Left lung (tissue), 14 donors: ENCODE measurements at regions of chr6 and their contacts with region 1.

Region 1: DNA sequence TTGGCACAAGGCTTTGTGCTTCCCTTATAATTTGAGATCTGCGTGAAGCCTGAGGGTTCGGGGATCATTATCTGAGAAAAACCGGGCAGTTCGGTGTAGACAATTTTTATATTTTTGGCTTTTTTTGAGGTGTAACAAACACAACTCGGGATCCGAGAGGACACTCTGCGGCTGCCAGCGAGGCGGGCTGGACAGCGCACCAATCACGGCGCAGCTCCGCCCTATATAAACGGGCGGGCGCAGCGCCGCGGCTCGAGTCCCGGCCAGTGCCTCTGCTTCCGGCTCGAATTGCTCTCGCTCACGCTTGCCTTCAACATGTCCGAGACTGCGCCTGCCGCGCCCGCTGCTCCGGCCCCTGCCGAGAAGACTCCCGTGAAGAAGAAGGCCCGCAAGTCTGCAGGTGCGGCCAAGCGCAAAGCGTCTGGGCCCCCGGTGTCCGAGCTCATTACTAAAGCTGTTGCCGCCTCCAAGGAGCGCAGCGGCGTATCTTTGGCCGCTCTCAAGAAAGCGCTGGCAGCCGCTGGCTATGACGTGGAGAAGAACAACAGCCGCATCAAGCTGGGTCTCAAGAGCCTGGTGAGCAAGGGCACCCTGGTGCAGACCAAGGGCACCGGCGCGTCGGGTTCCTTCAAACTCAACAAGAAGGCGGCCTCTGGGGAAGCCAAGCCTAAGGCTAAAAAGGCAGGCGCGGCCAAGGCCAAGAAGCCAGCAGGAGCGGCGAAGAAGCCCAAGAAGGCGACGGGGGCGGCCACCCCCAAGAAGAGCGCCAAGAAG is 69.0 kb downstream of the HFE start:
- DNase-seq: peak; percentile 91 to 97 (median 96)
- ATAC-seq: peak; percentile 76
- H3K4me3 ChIP-seq: peak overlapping the region; percentile 58 to 83
- H3K27ac ChIP-seq: peak overlapping the region; percentile 95 to 96
- H3K4me1 ChIP-seq: peaks cover 0 to 26% of the 10 kb centered on the region in 2 donors
- H3K27me3 ChIP-seq: no peaks in the 10 kb centered on the region
- CTCF ChIP-seq: no peak

Region 2: GRCh38 chr6:26123947-26124780 is 32.1 kb before region 1 on chr6:
- intact Hi-C with region 1: loop called in 1 of 2 experiments (anchors 2 kb)
- DNase-seq: peak; percentile 82 to 97 (median 92)
- ATAC-seq: peak; percentile 85
- H3K4me3 ChIP-seq: peak overlapping the region; percentile 74 to 75
- H3K27ac ChIP-seq: peak overlapping the region; percentile 96 to 99
- H3K4me1 ChIP-seq: peaks cover 19 to 35% of the 10 kb centered on the region in 2 donors
- H3K27me3 ChIP-seq: no peaks in the 10 kb centered on the region
- CTCF ChIP-seq: no peak